B cell (primary cell): ENCODE measurements at regions of chr17 and their contacts with region 1.

Region 1: DNA sequence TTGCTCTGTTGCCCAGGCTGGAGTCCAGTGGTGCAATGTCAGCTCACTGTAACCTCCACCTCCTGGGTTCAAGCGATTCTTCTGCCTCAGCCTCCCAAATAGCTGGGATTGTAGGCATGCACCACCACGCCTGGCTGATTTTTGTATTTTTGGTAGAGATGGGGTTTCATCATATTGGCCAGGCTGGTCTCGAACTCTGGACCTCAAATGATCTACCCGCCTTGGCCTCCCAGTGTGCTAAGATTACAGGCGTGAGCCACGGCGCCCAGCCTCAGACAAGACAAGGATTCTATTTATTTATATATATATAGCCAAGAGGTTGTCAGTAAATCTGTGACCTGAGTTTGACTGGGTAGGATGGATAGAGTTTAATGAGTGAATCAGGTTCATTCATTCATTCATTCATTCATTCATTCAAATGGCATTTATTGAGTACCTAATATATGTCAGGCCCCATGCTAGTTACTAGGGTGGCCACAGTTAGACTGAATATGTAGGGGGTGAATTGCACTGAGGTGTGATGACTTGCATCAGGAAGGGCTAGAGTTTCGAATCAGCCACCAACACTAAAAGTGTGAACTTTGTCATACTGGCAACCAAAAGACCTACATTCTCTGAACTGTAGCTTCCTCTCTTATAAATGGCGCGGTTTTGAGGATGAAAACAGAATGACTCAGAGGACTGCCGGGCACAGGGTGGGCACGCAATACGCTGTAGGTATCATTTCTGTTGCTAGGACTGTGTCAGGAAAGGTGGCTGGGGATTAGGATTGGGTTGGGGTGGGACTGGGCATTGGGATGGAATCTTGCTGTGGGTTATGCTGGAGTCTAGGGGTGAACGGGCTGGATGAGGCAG is 37.8 kb downstream of the ITGAE start:
- DNase-seq: no peak
- ATAC-seq: peak; percentile 43
- H3K4me3 ChIP-seq: no peak overlapping the region
- H3K4me3 Mint-ChIP-seq: peak overlapping the region; percentile 59
- H3K27ac ChIP-seq: no peak overlapping the region
- H3K27ac Mint-ChIP-seq: peak overlapping the region; percentile 88
- H3K4me1 ChIP-seq: peaks cover 10 to 22% of the 10 kb centered on the region in 2 donors
- H3K4me1 Mint-ChIP-seq: peaks cover 20% of the 10 kb centered on the region
- H3K27me3 ChIP-seq: no peaks in the 10 kb centered on the region
- H3K27me3 Mint-ChIP-seq: no peaks in the 10 kb centered on the region
- CTCF ChIP-seq: no peak

Region 2: DNA sequence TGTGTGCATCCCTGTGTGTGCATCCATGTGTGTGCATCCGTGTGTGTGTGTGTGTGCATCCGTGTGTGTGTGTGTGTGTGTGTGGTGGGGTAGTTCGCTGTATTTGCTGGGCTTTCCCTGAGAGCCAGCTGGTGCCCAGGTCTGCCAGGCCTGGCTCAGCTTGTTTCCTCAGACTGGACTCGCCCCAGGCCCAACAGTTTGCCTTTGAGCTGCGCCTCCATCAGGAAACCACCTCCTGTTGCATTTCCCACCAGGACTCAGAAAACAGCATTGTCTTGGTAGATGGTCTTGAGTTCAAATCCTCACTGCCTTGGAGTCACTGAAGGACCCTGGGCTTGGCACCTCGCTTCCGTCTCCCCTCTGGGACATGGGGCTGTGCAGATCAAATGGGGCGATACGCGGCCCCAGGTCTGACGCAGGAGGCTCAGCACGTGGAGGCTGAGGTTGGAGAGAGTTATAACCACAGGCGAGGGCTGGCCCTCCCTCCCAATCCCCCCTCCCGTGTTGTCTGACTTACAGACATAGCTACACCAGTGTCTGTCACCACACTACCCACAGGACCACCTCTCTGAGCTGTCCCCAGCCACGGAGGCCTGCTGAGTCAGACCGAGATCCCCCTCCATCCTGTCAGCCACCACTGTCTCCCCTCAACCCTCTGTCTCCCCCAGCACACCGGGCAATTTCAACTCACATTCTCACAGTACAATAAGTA is 33.1 kb after region 1 on chr17:
- CTCF ChIA-PET with region 1: interaction called, 3 read pairs
- POLR2A ChIA-PET with region 1: interaction called, 6 read pairs
- intact Hi-C with region 1: loop called (anchors 1 kb)
- DNase-seq: peak; percentile 66
- ATAC-seq: peak; percentile 71
- H3K4me3 ChIP-seq: no peak overlapping the region
- H3K4me3 Mint-ChIP-seq: peak overlapping the region; percentile 61
- H3K27ac ChIP-seq: no peak overlapping the region
- H3K27ac Mint-ChIP-seq: peak overlapping the region; percentile 86
- H3K4me1 ChIP-seq: peaks cover 14 to 47% of the 10 kb centered on the region in 2 donors
- H3K4me1 Mint-ChIP-seq: peaks cover 48% of the 10 kb centered on the region
- H3K27me3 ChIP-seq: no peaks in the 10 kb centered on the region
- H3K27me3 Mint-ChIP-seq: no peaks in the 10 kb centered on the region
- CTCF ChIP-seq: no peak

Region 3: GRCh38 chr17:3812771-3813170 is 49.6 kb after region 1 on chr17:
- CTCF ChIA-PET with region 1: interaction called, 6 read pairs
- POLR2A ChIA-PET with region 1: interaction called, 11 read pairs
- intact Hi-C with region 1: no loop called
- DNase-seq: no peak
- ATAC-seq: no peak
- H3K4me3 ChIP-seq: no peak overlapping the region
- H3K4me3 Mint-ChIP-seq: no peak overlapping the region
- H3K27ac ChIP-seq: no peak overlapping the region
- H3K27ac Mint-ChIP-seq: no peak overlapping the region
- H3K4me1 ChIP-seq: peaks cover 13 to 33% of the 10 kb centered on the region in 2 donors
- H3K4me1 Mint-ChIP-seq: peaks cover 43% of the 10 kb centered on the region
- H3K27me3 ChIP-seq: no peaks in the 10 kb centered on the region
- H3K27me3 Mint-ChIP-seq: no peaks in the 10 kb centered on the region
- CTCF ChIP-seq: no peak

Region 4: GRCh38 chr17:4143563-4144421 is 380.6 kb after region 1 on chr17:
- CTCF ChIA-PET with region 1: no interaction called
- POLR2A ChIA-PET with region 1: interaction called, 11 read pairs
- intact Hi-C with region 1: no loop called
- DNase-seq: peak; percentile 97
- ATAC-seq: peak; percentile 69
- H3K4me3 ChIP-seq: peak overlapping the region; percentile 65 to 95 (median 93)
- H3K4me3 Mint-ChIP-seq: peak overlapping the region; percentile 94
- H3K27ac ChIP-seq: peak overlapping the region; percentile 98 to 99
- H3K27ac Mint-ChIP-seq: peak overlapping the region; percentile 100
- H3K4me1 ChIP-seq: peaks cover 22 to 26% of the 10 kb centered on the region in 2 donors
- H3K4me1 Mint-ChIP-seq: peaks cover 39% of the 10 kb centered on the region
- H3K27me3 ChIP-seq: no peaks in the 10 kb centered on the region
- H3K27me3 Mint-ChIP-seq: no peaks in the 10 kb centered on the region
- CTCF ChIP-seq: no peak

Region 5: GRCh38 chr17:4498461-4499397 is 735.6 kb after region 1 on chr17 and contains the start of gene SPNS2:
- CTCF ChIA-PET with region 1: no interaction called
- POLR2A ChIA-PET with region 1: no interaction called
- intact Hi-C with region 1: no loop called
- DNase-seq: peak; percentile 75
- ATAC-seq: peak; percentile 80
- H3K4me3 ChIP-seq: peak within 1 kb of the TSS in 3 of 5 experiments; percentile 29 to 52 (median 40)
- H3K4me3 Mint-ChIP-seq: peak within 1 kb of the TSS; percentile 85
- H3K27ac ChIP-seq: no peak within 1 kb of the TSS
- H3K27ac Mint-ChIP-seq: no peak within 1 kb of the TSS
- H3K4me1 ChIP-seq: peaks cover 38 to 41% of the 10 kb centered on the region in 2 donors
- H3K4me1 Mint-ChIP-seq: peaks cover 26% of the 10 kb centered on the region
- H3K27me3 ChIP-seq: peaks cover 0 to 48% (median 31%) of the 10 kb centered on the region in 4 experiments
- H3K27me3 Mint-ChIP-seq: peaks cover 39% of the 10 kb centered on the region
- CTCF ChIP-seq: no peak
- total RNA-seq, gene SPNS2: 0.66 TPM in 1 of 2 replicates, not detected in the other